ENCODE measurements at regions of chr5 and their contacts with region 1.

Region 1: GRCh38 chr5:143403593-143404415 is at the start of gene NR3C1:
- DNase-seq: peak; percentile 80 to 95 (median 86)
- ATAC-seq: peak; percentile 72 to 81 (median 76)
- H3K4me3 ChIP-seq: peak within 1 kb of the TSS; percentile 71 to 97
- H3K4me3 Mint-ChIP-seq: peak within 1 kb of the TSS; percentile 89 to 95 (median 92)
- H3K27ac ChIP-seq: peak within 1 kb of the TSS; percentile 92
- H3K27ac Mint-ChIP-seq: peak within 1 kb of the TSS; percentile 96 to 99
- H3K4me1 ChIP-seq: peaks cover 26 to 29% of the 10 kb centered on the region in 2 experiments
- H3K4me1 Mint-ChIP-seq: peaks cover 40 to 47% (median 41%) of the 10 kb centered on the region in 3 donors
- H3K27me3 ChIP-seq: no peaks in the 10 kb centered on the region
- H3K27me3 Mint-ChIP-seq: no peaks in the 10 kb centered on the region
- total RNA-seq, gene NR3C1: 108 to 156 (median 122) TPM

Region 2: GRCh38 chr5:143231416-143231815 is 172.4 kb before region 1 on chr5:
- CTCF ChIA-PET with region 1: interaction called in 1 of 2 experiments, 10 read pairs
- POLR2A ChIA-PET with region 1: interaction called in 1 of 2 experiments, 3 read pairs
- DNase-seq: no peak
- ATAC-seq: no peak
- H3K4me3 ChIP-seq: no peak overlapping the region
- H3K4me3 Mint-ChIP-seq: no peak overlapping the region
- H3K27ac ChIP-seq: no peak overlapping the region
- H3K27ac Mint-ChIP-seq: no peak overlapping the region
- H3K4me1 ChIP-seq: peaks cover 11 to 17% of the 10 kb centered on the region in 2 experiments
- H3K4me1 Mint-ChIP-seq: peaks cover 24 to 39% (median 28%) of the 10 kb centered on the region in 3 donors
- H3K27me3 ChIP-seq: no peaks in the 10 kb centered on the region
- H3K27me3 Mint-ChIP-seq: no peaks in the 10 kb centered on the region

Region 3: GRCh38 chr5:143413958-143414669 is 10.3 kb after region 1 on chr5:
- CTCF ChIA-PET with region 1: no interaction called
- POLR2A ChIA-PET with region 1: interaction called, 7 to 12 read pairs
- DNase-seq: no peak
- ATAC-seq: peak in 3 of 4 experiments; percentile 36 to 66 (median 63)
- H3K4me3 ChIP-seq: no peak overlapping the region
- H3K4me3 Mint-ChIP-seq: peak overlapping the region in 1 of 3 donors; percentile 38
- H3K27ac ChIP-seq: no peak overlapping the region
- H3K27ac Mint-ChIP-seq: peak overlapping the region; percentile 46 to 79
- H3K4me1 ChIP-seq: peaks cover 0 to 12% of the 10 kb centered on the region in 2 experiments
- H3K4me1 Mint-ChIP-seq: peaks cover 10 to 65% (median 30%) of the 10 kb centered on the region in 3 donors
- H3K27me3 ChIP-seq: no peaks in the 10 kb centered on the region
- H3K27me3 Mint-ChIP-seq: no peaks in the 10 kb centered on the region

Region 4: DNA sequence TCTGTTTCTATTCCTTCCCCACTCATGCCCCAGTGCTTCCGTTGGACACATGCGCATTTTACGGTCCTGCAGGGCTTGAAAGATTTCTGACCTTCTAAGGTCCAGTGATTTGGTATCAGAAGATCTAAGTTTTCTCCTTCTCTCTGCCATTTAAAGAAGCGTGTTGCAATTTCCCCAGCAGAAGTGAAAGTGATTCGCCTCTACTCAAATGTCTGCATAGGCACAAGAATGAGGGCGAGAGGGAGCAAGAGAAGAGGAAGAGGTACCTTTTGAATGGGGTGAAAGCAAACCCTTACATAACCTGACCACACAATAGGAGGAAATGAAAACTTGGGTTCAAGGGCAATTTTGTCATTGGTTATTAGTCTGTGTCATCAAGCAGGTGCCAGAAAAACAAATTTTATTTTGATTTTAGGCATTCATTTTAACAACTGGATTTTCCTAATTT is 31.4 kb after region 1 on chr5:
- CTCF ChIA-PET with region 1: interaction called, 9 to 33 read pairs
- POLR2A ChIA-PET with region 1: interaction called, 4 to 12 read pairs
- DNase-seq: peak in 29 of 35 experiments; percentile 9 to 72 (median 30)
- ATAC-seq: peak; percentile 63 to 81 (median 72)
- H3K4me3 ChIP-seq: peak overlapping the region; percentile 52 to 58
- H3K4me3 Mint-ChIP-seq: peak overlapping the region; percentile 91 to 94 (median 92)
- H3K27ac ChIP-seq: peak overlapping the region; percentile 86
- H3K27ac Mint-ChIP-seq: peak overlapping the region; percentile 99 to 100
- H3K4me1 ChIP-seq: peaks cover 13 to 14% of the 10 kb centered on the region in 2 experiments
- H3K4me1 Mint-ChIP-seq: peaks cover 66 to 70% (median 69%) of the 10 kb centered on the region in 3 donors
- H3K27me3 ChIP-seq: no peaks in the 10 kb centered on the region
- H3K27me3 Mint-ChIP-seq: no peaks in the 10 kb centered on the region

Region 5: DNA sequence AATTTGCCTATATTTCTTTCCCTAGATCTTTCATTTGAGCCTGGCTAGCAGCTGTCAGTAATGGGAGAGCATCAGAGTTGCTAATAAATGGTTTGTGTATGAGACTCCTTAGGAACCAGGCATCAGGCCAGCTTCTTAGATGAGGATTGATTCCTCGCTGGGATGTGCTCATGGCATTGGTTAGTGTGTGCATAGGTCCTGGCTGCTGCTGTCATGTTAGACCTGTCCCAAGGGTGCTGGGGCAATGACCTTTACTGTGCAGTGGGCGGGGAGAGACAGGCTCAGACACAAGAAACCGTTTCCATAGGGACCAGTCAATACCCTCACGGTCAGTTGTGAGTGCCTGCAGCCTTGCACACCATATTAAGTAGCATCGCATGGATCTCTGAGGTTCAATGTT is 112.0 kb after region 1 on chr5:
- CTCF ChIA-PET with region 1: no interaction called
- POLR2A ChIA-PET with region 1: no interaction called
- DNase-seq: no peak
- ATAC-seq: no peak
- H3K4me3 ChIP-seq: no peak overlapping the region
- H3K4me3 Mint-ChIP-seq: no peak overlapping the region
- H3K27ac ChIP-seq: no peak overlapping the region
- H3K27ac Mint-ChIP-seq: no peak overlapping the region
- H3K4me1 ChIP-seq: no peaks in the 10 kb centered on the region
- H3K4me1 Mint-ChIP-seq: no peaks in the 10 kb centered on the region
- H3K27me3 ChIP-seq: no peaks in the 10 kb centered on the region
- H3K27me3 Mint-ChIP-seq: no peaks in the 10 kb centered on the region

Region 6: GRCh38 chr5:143819716-143820115 is 415.9 kb after region 1 on chr5:
- CTCF ChIA-PET with region 1: no interaction called
- POLR2A ChIA-PET with region 1: interaction called in 1 of 2 experiments, 16 read pairs
- DNase-seq: no peak
- ATAC-seq: no peak
- H3K4me3 ChIP-seq: no peak overlapping the region
- H3K4me3 Mint-ChIP-seq: no peak overlapping the region
- H3K27ac ChIP-seq: no peak overlapping the region
- H3K27ac Mint-ChIP-seq: no peak overlapping the region
- H3K4me1 ChIP-seq: no peaks in the 10 kb centered on the region
- H3K4me1 Mint-ChIP-seq: no peaks in the 10 kb centered on the region
- H3K27me3 ChIP-seq: no peaks in the 10 kb centered on the region
- H3K27me3 Mint-ChIP-seq: peaks cover 3 to 11% of the 10 kb centered on the region in 2 donors